Activated B cell treated with CpG ODN at 0.5 μM for 24 hours (primary cell): ENCODE measurements at regions of chr18 and their contacts with region 1.

Region 1: DNA sequence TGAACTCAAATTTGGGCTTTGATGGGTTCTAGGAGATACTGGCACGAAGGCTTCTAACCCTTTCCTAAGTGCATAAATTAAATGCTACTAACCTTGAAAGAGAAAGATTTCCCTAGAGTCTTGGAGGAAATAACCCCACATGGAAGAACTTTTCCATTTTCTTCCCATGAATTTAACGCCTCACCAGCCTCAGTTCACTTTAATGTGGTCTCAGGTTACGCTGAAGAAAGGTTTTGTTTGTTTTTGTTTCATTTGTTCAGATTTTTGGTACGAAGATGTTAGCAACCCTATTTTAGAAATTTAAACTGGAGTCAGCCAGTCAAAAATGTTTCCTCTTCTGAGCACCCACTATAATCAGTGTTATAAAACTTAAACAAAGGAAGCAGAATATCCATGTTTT is 30.7 kb downstream of the METTL4 start:
- DNase-seq: no peak
- ATAC-seq: no peak
- H3K4me3 Mint-ChIP-seq: no peak overlapping the region
- H3K27ac Mint-ChIP-seq: no peak overlapping the region
- H3K4me1 Mint-ChIP-seq: peaks cover 17% of the 10 kb centered on the region
- H3K27me3 Mint-ChIP-seq: no peaks in the 10 kb centered on the region
- CTCF ChIP-seq: no peak

Region 2: DNA sequence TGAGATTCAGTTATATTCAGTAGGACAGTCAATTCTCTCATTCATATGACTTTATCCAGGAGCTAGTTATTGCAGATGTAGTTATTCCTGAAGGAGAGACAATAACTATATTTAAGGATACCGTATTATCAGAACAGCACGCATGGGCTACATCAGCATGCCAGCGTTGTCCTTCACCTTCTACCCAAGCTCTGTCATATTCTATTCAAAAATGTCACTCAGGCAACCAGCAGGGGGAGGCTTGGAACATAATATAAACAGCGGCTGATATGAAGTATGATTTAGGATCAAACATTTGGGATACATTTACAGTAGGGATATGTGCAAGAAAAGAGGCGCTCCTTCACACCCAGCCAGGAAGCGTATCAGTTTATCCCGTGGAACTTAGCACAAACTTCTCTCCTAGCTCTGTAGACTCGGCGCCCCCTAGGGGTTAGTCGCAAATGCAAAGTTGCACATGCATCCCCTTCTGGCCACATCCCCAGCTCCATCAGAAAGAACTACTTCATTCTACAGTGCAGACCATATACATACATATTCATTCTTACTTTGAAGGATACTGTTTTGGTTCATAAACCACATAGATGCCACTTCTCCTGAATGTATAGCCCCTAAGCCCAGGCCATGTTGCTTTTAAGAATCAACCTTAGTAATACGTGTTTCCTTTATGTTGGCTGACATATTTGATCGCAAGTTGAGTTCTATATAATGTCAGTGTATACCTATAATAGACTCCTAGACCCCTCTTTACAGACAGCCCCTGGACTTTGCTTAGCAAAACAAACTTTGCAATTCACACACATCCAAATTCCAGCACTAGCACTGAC is 876.5 kb before region 1 on chr18:
- CTCF ChIA-PET with region 1: interaction called, 3 read pairs
- POLR2A ChIA-PET with region 1: no interaction called
- intact Hi-C with region 1: loop called (anchors 5 kb)
- DNase-seq: no peak
- ATAC-seq: no peak
- H3K4me3 Mint-ChIP-seq: no peak overlapping the region
- H3K27ac Mint-ChIP-seq: no peak overlapping the region
- H3K4me1 Mint-ChIP-seq: no peaks in the 10 kb centered on the region
- H3K27me3 Mint-ChIP-seq: no peaks in the 10 kb centered on the region
- CTCF ChIP-seq: no peak

Region 3: DNA sequence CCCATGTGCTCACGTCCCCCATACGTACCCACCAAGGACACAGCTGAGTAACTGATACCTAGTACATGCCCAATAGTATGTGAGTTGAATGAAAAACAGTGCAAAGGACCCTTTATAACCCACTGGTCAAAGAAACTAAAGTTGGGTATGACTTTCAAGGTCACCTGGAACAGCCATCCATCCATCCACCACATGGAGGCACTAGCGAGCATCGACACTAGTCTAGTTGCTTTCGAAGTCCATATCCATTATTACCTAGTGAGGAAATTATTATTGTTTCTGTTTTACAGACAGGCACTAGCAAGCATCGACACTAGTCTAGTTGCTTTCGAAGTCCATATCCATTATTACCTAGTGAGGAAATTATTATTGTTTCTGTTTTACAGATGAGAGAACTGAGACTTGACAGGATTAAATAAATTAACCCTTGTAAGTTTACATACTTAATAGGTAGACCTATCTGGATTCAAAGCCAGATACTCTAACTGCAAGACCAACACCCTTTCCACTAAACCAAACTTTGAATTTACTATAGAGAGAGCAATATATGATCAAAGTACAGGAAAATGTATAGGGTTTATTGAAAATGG is 202.9 kb before region 1 on chr18:
- CTCF ChIA-PET with region 1: interaction called, 44 read pairs
- POLR2A ChIA-PET with region 1: no interaction called
- intact Hi-C with region 1: loop called (anchors 1 kb)
- DNase-seq: no peak
- ATAC-seq: peak; percentile 58
- H3K4me3 Mint-ChIP-seq: no peak overlapping the region
- H3K27ac Mint-ChIP-seq: no peak overlapping the region
- H3K4me1 Mint-ChIP-seq: no peaks in the 10 kb centered on the region
- H3K27me3 Mint-ChIP-seq: peaks cover 21% of the 10 kb centered on the region
- CTCF ChIP-seq: peak; percentile 41

Region 4: DNA sequence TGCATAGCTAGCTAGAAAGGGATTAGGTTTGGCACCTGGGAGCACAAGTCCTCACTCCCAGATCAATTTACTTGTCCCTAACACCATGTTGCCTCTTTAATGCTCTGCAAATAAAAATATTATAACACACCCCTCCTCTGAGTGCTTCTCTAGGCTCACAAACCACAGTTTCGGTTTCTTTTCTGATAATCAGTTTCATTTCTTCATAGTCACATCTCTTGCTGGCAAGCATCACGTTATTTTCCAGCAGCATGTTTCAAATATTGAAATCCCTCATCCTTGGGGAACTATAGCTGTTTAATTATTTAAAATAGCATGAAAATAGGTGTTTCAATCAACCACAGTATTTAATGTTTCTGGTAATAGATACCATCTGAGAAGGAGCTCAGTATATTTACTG is 101.1 kb after region 1 on chr18:
- CTCF ChIA-PET with region 1: no interaction called
- POLR2A ChIA-PET with region 1: no interaction called
- intact Hi-C with region 1: no loop called
- DNase-seq: no peak
- ATAC-seq: peak; percentile 59
- H3K4me3 Mint-ChIP-seq: peak overlapping the region; percentile 77
- H3K27ac Mint-ChIP-seq: no peak overlapping the region
- H3K4me1 Mint-ChIP-seq: peaks cover 54% of the 10 kb centered on the region
- H3K27me3 Mint-ChIP-seq: no peaks in the 10 kb centered on the region
- CTCF ChIP-seq: no peak